GM12878 (cell line): ENCODE measurements at regions of chr6 and their contacts with region 1.

Region 1: GRCh38 chr6:125764121-125764671 is 14.8 kb downstream of the HEY2 start:
- DNase-seq: no peak
- ATAC-seq: no peak; the same call in 2 of the 3 replicates
- H3K4me3 ChIP-seq: no peak overlapping the region
- H3K27ac ChIP-seq: no peak overlapping the region
- H3K4me1 ChIP-seq: no peaks in the 10 kb centered on the region
- H3K27me3 ChIP-seq: no peaks in the 10 kb centered on the region
- CTCF ChIP-seq: no peak
- EP300 ChIP-seq: no peak
- POLR2A ChIP-seq: no peak
- RAD21 ChIP-seq: no peak

Region 2: DNA sequence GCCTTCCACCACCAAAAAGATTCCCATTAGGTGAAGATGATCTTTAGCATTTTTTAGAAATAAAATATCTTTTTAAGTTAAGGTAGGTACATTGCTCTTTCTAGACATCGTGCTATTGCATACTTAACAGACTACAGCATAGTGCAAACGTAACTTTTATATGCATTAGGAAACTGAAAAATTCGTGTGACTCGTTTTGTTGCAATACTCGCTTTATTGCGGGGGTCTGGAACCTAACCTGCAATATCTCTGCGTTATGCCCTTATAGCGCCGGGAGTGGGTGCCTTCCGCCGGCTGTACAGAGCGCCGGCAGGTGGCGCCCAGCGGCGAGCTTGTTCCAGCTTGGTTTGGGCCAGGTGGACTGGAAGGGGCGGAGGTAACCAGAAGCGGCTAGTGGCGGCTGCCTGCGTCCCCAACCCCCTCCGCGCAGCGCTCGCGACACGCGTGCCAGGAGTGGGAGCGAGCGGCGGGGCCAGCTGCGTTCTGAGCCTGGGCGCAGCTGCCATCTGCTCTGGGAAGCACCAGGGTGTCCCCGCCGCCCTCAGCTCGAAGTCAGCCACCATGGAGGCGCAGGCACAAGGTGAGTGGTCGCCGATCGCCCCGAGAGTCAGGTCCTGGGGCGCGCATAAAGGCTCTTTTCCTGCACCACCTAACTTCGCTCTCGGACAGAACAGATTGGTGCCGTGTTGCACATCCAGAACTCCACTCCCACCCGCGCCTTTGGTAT is 610.6 kb before region 1 on chr6 and contains the start of gene TPD52L1:
- CTCF ChIA-PET with region 1: no interaction called
- POLR2A ChIA-PET with region 1: no interaction called
- RAD21 ChIA-PET with region 1: no interaction called
- SMC1A ChIA-PET with region 1: no interaction called
- in situ Hi-C with region 1: loop called (anchors 25 kb)
- intact Hi-C with region 1: loop called (anchors 10 kb)
- DNase-seq: no peak
- ATAC-seq: peak; percentile 99
- H3K4me3 ChIP-seq: no peak within 1 kb of the TSS
- H3K27ac ChIP-seq: no peak within 1 kb of the TSS
- H3K4me1 ChIP-seq: no peaks in the 10 kb centered on the region
- H3K27me3 ChIP-seq: peaks cover 0 to 10% of the 10 kb centered on the region in 2 experiments; a peak in 3 of 4 replicates
- CTCF ChIP-seq: peak; percentile 70 to 93 (median 76)
- EP300 ChIP-seq: no peak
- POLR2A ChIP-seq: no peak
- RAD21 ChIP-seq: peak; percentile 32; the same call in 1 of the 2 replicates
- polyA plus RNA-seq, gene TPD52L1: 0.09 to 0.16 TPM

Region 3: DNA sequence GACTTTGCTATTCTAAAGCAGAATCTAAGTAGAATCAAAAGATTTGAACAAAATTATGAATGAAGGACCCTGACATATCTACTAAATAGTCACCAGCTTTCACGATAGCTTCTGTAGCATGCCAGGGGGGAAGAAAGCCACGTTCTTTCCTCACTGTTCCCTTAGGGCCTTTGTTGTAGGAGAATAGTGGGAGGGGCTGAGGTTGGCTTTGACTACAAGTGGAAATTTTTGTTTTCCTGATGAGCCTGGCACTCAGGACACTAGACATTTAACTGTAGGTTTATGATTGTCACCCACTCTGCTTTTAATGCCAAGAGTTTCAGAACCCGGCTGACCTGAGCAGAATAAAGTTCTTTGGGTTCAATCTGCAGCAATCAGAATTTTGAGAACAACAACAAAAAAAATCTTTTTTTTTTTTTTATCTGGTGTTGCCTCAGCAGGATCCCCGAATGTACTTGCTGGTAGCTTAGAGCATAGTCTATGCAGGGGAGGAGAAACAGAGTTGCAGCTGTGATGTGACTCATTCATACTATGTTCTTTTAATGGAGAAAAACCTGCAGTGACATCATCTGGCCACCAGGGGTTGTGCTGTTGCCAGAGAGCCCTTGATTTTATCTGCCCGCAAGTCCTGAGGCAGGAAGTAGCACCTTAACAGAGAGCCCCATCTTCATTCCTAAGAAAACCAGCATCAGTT is 572.1 kb before region 1 on chr6:
- CTCF ChIA-PET with region 1: no interaction called
- POLR2A ChIA-PET with region 1: no interaction called
- RAD21 ChIA-PET with region 1: no interaction called
- SMC1A ChIA-PET with region 1: no interaction called
- in situ Hi-C with region 1: no loop called
- intact Hi-C with region 1: loop called (anchors 10 kb)
- DNase-seq: peak; percentile 7
- ATAC-seq: peak; percentile 97
- H3K4me3 ChIP-seq: no peak overlapping the region
- H3K27ac ChIP-seq: no peak overlapping the region
- H3K4me1 ChIP-seq: no peaks in the 10 kb centered on the region
- H3K27me3 ChIP-seq: no peaks in the 10 kb centered on the region
- CTCF ChIP-seq: peak; percentile 75 to 83 (median 75)
- EP300 ChIP-seq: no peak
- POLR2A ChIP-seq: no peak
- RAD21 ChIP-seq: peak; percentile 41; the same call in 1 of the 2 replicates

Region 4: GRCh38 chr6:125528621-125529041 is 235.6 kb before region 1 on chr6:
- CTCF ChIA-PET with region 1: no interaction called
- POLR2A ChIA-PET with region 1: no interaction called
- RAD21 ChIA-PET with region 1: no interaction called
- SMC1A ChIA-PET with region 1: interaction called, 4 read pairs
- in situ Hi-C with region 1: loop called (anchors 10 kb)
- intact Hi-C with region 1: no loop called
- DNase-seq: no peak
- ATAC-seq: no peak
- H3K4me3 ChIP-seq: no peak overlapping the region
- H3K27ac ChIP-seq: no peak overlapping the region
- H3K4me1 ChIP-seq: no peaks in the 10 kb centered on the region
- H3K27me3 ChIP-seq: peaks cover 0 to 1% of the 10 kb centered on the region in 2 experiments; a peak in 2 of 4 replicates
- CTCF ChIP-seq: no peak
- EP300 ChIP-seq: no peak
- POLR2A ChIP-seq: no peak
- RAD21 ChIP-seq: no peak

Region 5: DNA sequence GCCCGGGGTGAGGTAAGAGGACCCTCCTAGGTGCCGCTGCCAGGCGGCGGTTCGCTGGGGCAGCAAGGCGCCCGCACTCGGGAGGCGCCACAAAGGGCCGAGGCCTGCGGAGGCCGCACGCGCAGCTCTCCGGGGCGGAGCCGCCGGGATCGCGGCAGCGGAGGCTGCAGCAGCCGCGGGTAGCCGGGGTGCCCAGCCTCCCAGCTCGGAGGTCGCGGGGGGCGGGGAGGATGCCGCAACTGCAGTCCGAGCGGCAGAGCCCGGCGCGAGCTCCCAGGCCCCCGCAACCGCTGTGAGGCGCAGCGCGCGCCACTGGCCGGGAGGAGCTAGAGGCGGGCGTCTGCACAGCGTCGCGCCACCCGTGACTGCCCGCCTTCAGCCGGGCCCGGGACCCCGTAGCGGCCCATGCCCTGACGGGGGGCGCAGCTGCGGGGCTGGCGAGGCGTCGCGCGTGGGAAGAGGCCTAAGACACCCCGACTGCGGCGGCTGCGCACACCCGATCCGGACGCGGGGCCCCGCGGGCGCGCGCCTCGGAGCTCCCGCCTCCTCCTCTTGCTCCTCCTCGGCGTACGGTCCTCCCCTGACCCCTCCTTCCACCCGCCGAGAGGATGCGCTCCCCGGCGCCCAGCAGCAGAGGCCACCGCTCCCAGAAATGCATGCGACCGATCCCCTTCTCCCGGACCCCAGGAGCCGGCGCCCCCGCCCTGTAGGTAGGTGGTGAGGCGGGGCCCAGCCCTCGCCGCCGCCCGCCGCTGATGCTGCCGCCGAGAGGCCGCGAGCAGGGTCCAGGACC is 26.4 kb after region 1 on chr6 and contains the start of gene NCOA7:
- CTCF ChIA-PET with region 1: no interaction called
- POLR2A ChIA-PET with region 1: no interaction called
- RAD21 ChIA-PET with region 1: no interaction called
- SMC1A ChIA-PET with region 1: no interaction called
- in situ Hi-C with region 1: no loop called
- intact Hi-C with region 1: no loop called
- DNase-seq: no peak
- ATAC-seq: peak; percentile 83
- H3K4me3 ChIP-seq: peak within 1 kb of the TSS; percentile 91
- H3K27ac ChIP-seq: peak within 1 kb of the TSS; percentile 91
- H3K4me1 ChIP-seq: peaks cover 24% of the 10 kb centered on the region
- H3K27me3 ChIP-seq: no peaks in the 10 kb centered on the region
- CTCF ChIP-seq: no peak
- EP300 ChIP-seq: no peak
- POLR2A ChIP-seq: peak; percentile 85
- RAD21 ChIP-seq: no peak
- polyA plus RNA-seq, gene NCOA7: 18.9 to 28.8 TPM